PC-3 (cell line): ENCODE measurements at regions of chr3 and their contacts with region 1.

Region 1: GRCh38 chr3:114056130-114057010 is at the starts of genes CCDC191 and QTRT2:
- DNase-seq: peak; percentile 99
- ATAC-seq: peak; percentile 98
- H3K4me3 ChIP-seq: peak within 1 kb of the TSS; percentile 76
- H3K27ac ChIP-seq: peak within 1 kb of the TSS; percentile 71
- H3K4me1 ChIP-seq: peaks cover 21% of the 10 kb centered on the region
- H3K27me3 ChIP-seq: no peaks in the 10 kb centered on the region
- CTCF ChIP-seq: no peak
- total RNA-seq, gene CCDC191: 1.3 and 1.7 TPM in 2 replicates
- total RNA-seq, gene QTRT2: 35.0 and 38.0 TPM in 2 replicates

Region 2: DNA sequence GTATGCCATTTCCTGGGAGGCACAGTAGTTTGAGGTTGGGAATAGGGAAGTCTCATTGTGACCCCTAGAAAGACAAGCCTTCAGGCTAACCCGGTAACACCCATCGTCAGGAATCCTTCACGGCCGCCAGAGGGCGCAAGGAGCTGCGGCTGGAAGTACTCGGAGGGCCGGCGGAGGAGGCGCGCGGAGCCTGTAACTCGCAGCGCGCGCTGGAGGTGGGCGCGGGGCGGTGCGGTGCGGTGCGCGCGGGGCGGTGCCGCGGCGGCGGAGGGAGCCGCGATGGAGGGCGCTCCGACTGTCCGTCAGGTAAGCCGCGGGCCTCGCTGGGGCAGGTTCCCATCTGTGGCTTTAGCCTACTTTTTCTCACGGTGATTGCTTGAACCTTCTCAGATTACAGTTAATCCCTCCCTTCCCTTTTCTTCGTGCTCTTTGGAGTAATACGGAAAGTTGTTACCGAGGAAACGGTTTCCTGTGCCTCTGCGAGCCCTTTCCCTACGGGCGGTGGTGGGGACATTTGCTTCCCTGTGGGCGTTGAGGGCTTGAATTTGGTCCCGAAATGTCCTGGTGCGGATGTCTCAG is 217.7 kb before region 1 on chr3 and contains the start of gene GRAMD1C:
- CTCF ChIA-PET with region 1: no interaction called
- POLR2A ChIA-PET with region 1: no interaction called
- intact Hi-C with region 1: loop called (anchors 2 kb)
- DNase-seq: peak; percentile 91
- ATAC-seq: peak; percentile 94
- H3K4me3 ChIP-seq: peak within 1 kb of the TSS; percentile 80
- H3K27ac ChIP-seq: no peak within 1 kb of the TSS
- H3K4me1 ChIP-seq: peaks cover 17% of the 10 kb centered on the region
- H3K27me3 ChIP-seq: no peaks in the 10 kb centered on the region
- CTCF ChIP-seq: peak; percentile 90
- total RNA-seq, gene GRAMD1C: 2.8 and 4.5 TPM in 2 replicates

Region 3: DNA sequence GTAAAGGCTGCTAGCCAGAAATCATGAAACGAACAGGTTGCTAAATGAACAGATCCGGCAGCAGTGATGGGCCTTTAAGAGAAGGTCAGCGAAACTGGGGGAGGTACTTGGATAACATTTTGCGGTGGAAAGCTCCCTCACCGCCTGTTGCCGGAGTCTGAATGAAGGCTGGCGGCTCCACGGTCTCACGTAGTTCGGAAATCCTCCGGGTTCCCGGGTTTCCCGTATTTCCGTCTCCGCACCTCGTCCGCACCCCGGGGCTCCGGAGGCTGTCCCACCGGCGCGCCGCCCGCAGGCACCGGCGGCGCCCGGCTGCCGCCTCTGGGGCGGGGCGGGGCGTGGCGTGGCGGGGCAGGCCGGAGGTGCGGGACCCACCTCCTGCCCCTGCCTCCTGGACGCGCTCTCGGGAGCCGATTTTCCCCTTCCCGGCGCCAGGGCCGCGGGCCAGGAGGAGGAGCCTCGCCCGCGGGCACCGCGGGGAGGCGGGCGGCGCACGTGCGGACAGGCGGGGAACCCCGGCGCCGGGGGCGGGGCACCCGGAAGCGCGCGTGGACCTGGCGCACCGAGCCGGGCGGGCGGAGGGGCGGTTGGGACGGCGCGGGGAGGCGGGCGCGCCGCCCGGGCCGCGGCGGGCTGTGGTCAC is 108.9 kb before region 1 on chr3 and contains the start of gene ZDHHC23:
- CTCF ChIA-PET with region 1: no interaction called
- POLR2A ChIA-PET with region 1: interaction called, 3 read pairs
- intact Hi-C with region 1: loop called (anchors 5 kb)
- DNase-seq: peak; percentile 80
- ATAC-seq: peak; percentile 76
- H3K4me3 ChIP-seq: peak within 1 kb of the TSS; percentile 73
- H3K27ac ChIP-seq: no peak within 1 kb of the TSS
- H3K4me1 ChIP-seq: peaks cover 17% of the 10 kb centered on the region
- H3K27me3 ChIP-seq: no peaks in the 10 kb centered on the region
- CTCF ChIP-seq: no peak
- total RNA-seq, gene ZDHHC23: 7.1 and 8.3 TPM in 2 replicates

Region 4: GRCh38 chr3:114223143-114223542 is 166.8 kb after region 1 on chr3:
- CTCF ChIA-PET with region 1: no interaction called
- POLR2A ChIA-PET with region 1: no interaction called
- intact Hi-C with region 1: no loop called
- DNase-seq: no peak
- ATAC-seq: no peak
- H3K4me3 ChIP-seq: no peak overlapping the region
- H3K27ac ChIP-seq: no peak overlapping the region
- H3K4me1 ChIP-seq: no peaks in the 10 kb centered on the region
- H3K27me3 ChIP-seq: peaks cover 17% of the 10 kb centered on the region; the same call in 1 of the 2 replicates
- CTCF ChIP-seq: no peak